ENCODE measurements at regions of chr6 and their contacts with region 1.

Region 1: GRCh38 chr6:24910961-24911712 is 24.6 kb downstream of the RIPOR2 start:
- DNase-seq: peak; percentile 60
- ATAC-seq: peak; percentile 59
- H3K4me3 Mint-ChIP-seq: peak overlapping the region; percentile 79
- H3K27ac Mint-ChIP-seq: peak overlapping the region; percentile 75
- H3K4me1 Mint-ChIP-seq: peaks cover 74% of the 10 kb centered on the region
- H3K27me3 Mint-ChIP-seq: no peaks in the 10 kb centered on the region

Region 2: DNA sequence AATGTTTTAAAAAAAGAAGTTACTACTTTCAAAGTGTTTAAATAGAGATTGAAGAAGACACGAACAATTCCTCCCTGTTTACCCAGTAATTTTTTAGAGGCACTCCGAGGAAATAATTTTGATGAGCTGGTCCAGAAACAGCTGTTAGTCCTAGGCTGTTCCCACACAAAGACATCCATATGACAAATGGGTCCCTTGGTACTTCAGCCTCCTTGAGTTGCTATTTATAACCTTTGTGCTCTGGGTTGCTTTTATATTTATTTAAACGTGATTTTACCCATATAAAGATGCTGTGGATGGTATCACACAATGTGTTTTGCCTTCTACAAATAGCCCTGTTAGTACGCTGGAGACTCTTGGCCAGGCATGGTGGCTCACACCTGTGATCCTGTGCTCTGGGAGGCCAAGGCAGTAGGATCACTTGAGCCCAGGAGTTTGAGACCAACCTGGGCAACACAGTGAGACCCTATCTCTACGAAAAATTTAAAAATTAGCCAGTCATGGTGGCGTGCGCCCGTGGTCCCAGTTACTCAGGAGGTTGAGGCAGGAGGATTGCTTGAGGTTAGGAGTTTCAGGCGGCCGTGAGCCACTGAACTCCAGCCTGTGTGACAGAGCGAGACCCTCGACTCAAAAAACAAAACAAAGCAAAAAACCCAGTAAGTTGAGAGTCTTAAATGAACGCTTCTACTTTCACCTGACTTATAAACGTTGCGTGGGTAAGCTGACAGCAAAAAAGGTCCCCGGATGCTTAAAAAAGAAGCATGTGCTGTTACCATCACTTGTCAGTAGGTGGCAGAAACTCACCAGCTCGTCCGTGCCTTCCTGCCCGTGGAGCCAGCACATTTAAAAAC is 55.5 kb before region 1 on chr6:
- CTCF ChIA-PET with region 1: interaction called, 20 read pairs
- DNase-seq: peak; percentile 78
- ATAC-seq: peak; percentile 60
- H3K4me3 Mint-ChIP-seq: no peak overlapping the region
- H3K27ac Mint-ChIP-seq: peak overlapping the region; percentile 88
- H3K4me1 Mint-ChIP-seq: peaks cover 52% of the 10 kb centered on the region
- H3K27me3 Mint-ChIP-seq: no peaks in the 10 kb centered on the region

Region 3: DNA sequence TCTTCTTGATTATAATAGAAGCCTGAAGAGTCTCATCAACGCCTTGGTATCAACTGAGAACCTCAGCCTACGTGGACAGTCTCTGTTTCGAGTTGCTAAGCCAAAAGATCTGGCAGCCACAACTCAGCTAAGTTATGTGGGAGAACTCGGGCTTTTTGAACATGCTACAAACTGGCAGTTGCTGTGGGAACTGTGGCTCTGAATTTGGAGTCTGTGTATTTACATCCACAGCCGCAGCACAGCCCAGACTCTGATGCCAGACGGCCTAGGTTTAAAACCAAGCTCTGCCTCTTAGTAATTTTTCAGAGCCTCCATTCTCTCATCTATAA is 11.2 kb before region 1 on chr6:
- CTCF ChIA-PET with region 1: interaction called, 20 read pairs
- DNase-seq: no peak
- ATAC-seq: peak; percentile 48
- H3K4me3 Mint-ChIP-seq: no peak overlapping the region
- H3K27ac Mint-ChIP-seq: peak overlapping the region; percentile 57
- H3K4me1 Mint-ChIP-seq: peaks cover 55% of the 10 kb centered on the region
- H3K27me3 Mint-ChIP-seq: no peaks in the 10 kb centered on the region